ENCODE measurements at regions of chr13 and their contacts with region 1.

Region 1: DNA sequence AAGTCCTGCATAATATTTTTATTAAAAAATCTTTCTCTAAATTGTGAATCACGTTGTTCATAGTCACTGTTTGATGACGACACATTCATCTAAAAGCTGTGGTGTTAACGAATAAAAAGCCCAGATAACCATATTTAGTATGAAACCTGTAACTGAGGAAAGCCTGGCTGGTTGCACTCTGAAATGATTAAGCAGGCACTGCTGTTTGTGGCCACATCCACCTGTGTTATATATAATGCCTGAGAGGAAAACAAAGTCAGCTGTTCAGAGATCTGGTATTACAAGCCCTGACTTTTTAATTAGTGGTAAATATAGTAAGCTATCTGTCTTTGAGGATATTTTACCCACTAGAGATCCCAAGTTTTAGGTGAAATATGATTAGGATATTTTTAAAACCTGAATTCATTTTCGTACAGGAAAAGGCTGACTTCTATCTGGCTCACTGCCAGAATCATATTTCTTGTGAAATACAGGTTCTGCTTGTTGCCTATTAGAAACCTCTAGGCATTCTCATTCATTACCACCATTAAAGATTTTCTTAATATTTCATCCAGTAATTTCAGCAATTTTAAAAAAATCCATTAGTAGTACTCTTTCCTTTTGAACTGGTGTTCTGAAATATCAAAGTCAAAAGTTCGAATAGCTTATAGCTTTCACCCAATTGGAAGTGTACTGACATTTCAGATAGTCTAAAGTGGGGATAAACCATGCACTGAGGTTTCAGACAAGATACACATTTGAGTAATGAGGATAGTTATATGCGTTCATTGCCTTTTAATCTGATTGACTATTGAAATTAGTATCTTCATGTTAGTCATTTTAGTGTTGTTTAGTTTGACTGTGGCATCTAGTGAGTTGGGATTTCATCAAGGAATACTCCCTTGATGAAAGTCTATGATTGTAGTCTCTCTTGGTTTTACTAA is 79.7 kb downstream of the LMO7 start:
- DNase-seq: no peak
- ATAC-seq: 0 out of 2 replicates have a peak, but pooled peaks have one; percentile 6
- H3K4me3 ChIP-seq: no peak overlapping the region
- H3K27ac ChIP-seq: peak overlapping the region; percentile 45; the same call in 1 of the 2 replicates
- H3K4me1 ChIP-seq: peaks cover 7% of the 10 kb centered on the region; the same call in 1 of the 2 replicates
- H3K27me3 ChIP-seq: no peaks in the 10 kb centered on the region
- CTCF ChIP-seq: no peak
- POLR2A ChIP-seq: no peak
- RAD21 ChIP-seq: no peak

Region 2: DNA sequence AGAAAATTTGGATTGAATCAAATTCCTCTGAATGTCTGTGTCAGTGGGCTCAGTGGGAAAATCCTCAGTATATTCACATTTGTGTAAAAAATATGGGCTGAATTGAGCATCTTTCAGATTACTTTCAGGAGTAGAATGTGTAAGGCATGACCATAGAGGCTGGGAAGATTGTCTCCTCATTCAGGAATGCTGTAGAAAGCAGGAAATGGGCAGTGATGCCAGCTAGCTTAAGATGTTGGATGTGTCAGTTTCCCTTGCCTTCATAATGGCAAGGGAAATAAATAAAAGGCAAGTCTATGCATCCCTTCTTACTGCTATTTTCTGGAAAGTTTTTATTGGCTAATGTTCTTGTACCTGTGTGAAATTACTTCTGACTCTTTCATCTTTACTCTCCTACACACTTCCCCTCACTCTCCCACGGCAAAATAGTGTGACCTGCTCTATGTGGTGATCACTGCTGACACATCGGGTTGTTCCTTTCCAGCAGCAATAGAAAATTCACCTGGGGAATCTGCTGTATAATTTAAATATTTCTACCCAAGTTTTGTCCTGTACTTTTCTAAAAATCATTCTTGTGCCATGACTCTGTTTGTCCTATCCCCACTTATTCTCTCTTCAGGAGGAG is 23.5 kb after region 1 on chr13:
- CTCF ChIA-PET with region 1: interaction called, 3 read pairs
- POLR2A ChIA-PET with region 1: interaction called, 15 read pairs
- dilution Hi-C with region 1: no loop called
- in situ Hi-C with region 1: no loop called
- intact Hi-C with region 1: no loop called
- DNase-seq: peak; percentile 35
- ATAC-seq: no peak
- H3K4me3 ChIP-seq: no peak overlapping the region
- H3K27ac ChIP-seq: peak overlapping the region; percentile 25; the same call in 1 of the 2 replicates
- H3K4me1 ChIP-seq: peaks cover 18% of the 10 kb centered on the region
- H3K27me3 ChIP-seq: no peaks in the 10 kb centered on the region
- CTCF ChIP-seq: no peak
- POLR2A ChIP-seq: no peak
- RAD21 ChIP-seq: no peak

Region 3: GRCh38 chr13:75760131-75761021 is 44.5 kb after region 1 on chr13:
- CTCF ChIA-PET with region 1: no interaction called
- POLR2A ChIA-PET with region 1: no interaction called
- dilution Hi-C with region 1: no loop called
- in situ Hi-C with region 1: no loop called
- intact Hi-C with region 1: loop called (anchors 2 kb)
- DNase-seq: peak; percentile 33
- ATAC-seq: peak; percentile 36
- H3K4me3 ChIP-seq: no peak overlapping the region
- H3K27ac ChIP-seq: peak overlapping the region; percentile 15; the same call in 1 of the 2 replicates
- H3K4me1 ChIP-seq: peaks cover 21% of the 10 kb centered on the region
- H3K27me3 ChIP-seq: no peaks in the 10 kb centered on the region
- CTCF ChIP-seq: 0 out of 2 replicates have a peak, but pooled peaks have one; percentile 8
- POLR2A ChIP-seq: no peak
- RAD21 ChIP-seq: no peak

Measured in IMR-90 (cell line).